ENCODE measurements at regions of chr6 and their contacts with region 1.

Region 1: DNA sequence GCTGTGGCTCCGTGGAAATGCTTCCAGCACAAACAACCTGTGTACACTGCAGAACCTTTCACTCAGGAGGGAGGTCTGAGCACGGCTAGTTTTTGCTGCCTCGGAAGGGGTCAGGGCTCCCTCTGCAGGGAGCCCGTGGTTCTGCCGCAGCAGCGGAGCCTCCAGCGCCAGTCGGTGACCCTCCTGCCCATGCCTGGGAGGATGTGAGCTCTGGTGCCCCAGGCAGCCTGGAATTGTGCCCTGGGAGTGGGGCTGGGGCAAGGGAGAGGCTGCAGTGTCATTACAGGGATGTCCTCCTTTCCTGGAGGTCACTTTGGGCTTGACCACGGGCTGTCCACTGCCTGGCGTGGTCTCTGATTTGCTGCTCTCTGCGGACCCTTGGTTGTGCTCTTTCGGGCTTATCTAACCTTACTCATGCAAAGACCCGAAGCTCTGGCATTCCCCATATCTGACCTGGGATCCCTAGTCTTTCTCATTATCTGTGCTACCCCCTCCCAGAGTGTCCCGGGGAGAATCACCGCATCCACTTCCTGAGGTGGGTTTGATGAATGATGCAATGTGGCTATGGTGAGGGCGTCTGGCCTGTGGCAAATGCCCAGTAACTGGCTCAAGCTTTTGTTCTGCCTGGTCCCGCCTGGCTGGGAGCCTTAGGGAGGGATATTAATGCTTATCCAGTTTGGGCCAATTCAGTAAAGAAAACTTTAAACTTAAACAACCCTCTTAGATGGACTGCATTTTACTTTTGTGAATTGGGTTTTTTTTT is 59.6 kb upstream of the TAGAP start:
- DNase-seq: peak; percentile 79
- ATAC-seq: peak; percentile 90
- H3K4me3 Mint-ChIP-seq: no peak overlapping the region
- H3K27ac Mint-ChIP-seq: no peak overlapping the region
- H3K4me1 Mint-ChIP-seq: peaks cover 31% of the 10 kb centered on the region
- H3K27me3 Mint-ChIP-seq: no peaks in the 10 kb centered on the region
- CTCF ChIP-seq: peak; percentile 84

Region 2: GRCh38 chr6:158999666-159000403 is 104.5 kb before region 1 on chr6 and contains the start of gene RSPH3:
- CTCF ChIA-PET with region 1: interaction called, 11 read pairs
- POLR2A ChIA-PET with region 1: interaction called, 5 read pairs
- DNase-seq: peak; percentile 98
- ATAC-seq: peak; percentile 91
- H3K4me3 Mint-ChIP-seq: peak within 1 kb of the TSS; percentile 95
- H3K27ac Mint-ChIP-seq: peak within 1 kb of the TSS; percentile 97
- H3K4me1 Mint-ChIP-seq: peaks cover 16% of the 10 kb centered on the region
- H3K27me3 Mint-ChIP-seq: no peaks in the 10 kb centered on the region
- CTCF ChIP-seq: no peak
- total RNA-seq, gene RSPH3: 2.4 to 3.2 TPM (median 2.7 TPM) in 3 replicates

Region 3: GRCh38 chr6:159008656-159009288 is 95.6 kb before region 1 on chr6:
- CTCF ChIA-PET with region 1: interaction called, 26 read pairs
- POLR2A ChIA-PET with region 1: no interaction called
- DNase-seq: no peak
- ATAC-seq: 0 out of 2 replicates have a peak, but pooled peaks have one; percentile 41
- H3K4me3 Mint-ChIP-seq: no peak overlapping the region
- H3K27ac Mint-ChIP-seq: no peak overlapping the region
- H3K4me1 Mint-ChIP-seq: no peaks in the 10 kb centered on the region
- H3K27me3 Mint-ChIP-seq: no peaks in the 10 kb centered on the region
- CTCF ChIP-seq: no peak

Region 4: DNA sequence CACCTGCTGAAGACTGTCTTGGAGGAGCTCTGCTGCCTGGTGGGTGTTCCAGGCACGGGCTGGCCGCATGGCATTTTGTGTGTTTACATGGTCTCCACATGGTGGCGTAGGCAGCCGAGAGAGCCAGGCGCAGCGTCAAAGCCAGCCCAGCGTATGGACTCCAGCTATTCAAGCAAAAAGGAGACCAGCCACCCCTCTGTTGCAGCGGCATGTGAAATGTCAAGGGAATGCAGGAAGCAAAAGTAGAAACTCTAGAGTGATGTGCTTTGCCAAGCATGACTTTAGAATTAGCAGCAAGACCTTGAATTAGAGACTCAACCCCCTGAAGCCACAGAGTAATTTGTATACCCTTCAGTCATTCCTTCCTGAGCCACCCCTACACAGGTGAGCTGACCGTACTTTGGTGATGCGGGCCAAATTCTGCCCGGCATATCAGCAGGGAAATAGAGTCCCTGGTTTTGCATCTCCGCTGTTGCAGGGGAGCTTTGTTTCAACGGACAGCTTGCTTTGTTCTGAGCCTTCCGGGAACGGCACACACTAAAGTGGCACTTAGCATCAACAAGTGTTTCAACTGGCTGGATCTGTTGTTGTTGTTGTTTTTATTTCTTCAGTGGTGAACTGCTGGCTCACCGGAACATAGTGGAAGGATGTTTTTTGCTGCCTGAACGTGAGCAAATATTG is 113.4 kb after region 1 on chr6:
- CTCF ChIA-PET with region 1: no interaction called
- POLR2A ChIA-PET with region 1: no interaction called
- DNase-seq: peak; percentile 80
- ATAC-seq: peak; percentile 94
- H3K4me3 Mint-ChIP-seq: no peak overlapping the region
- H3K27ac Mint-ChIP-seq: peak overlapping the region; percentile 21; the same call in 1 of the 2 replicates
- H3K4me1 Mint-ChIP-seq: peaks cover 23% of the 10 kb centered on the region
- H3K27me3 Mint-ChIP-seq: no peaks in the 10 kb centered on the region
- CTCF ChIP-seq: 0 out of 2 replicates have a peak, but pooled peaks have one; percentile 14